ENCODE measurements at regions of chr7 and their contacts with region 1.

Region 1: GRCh38 chr7:5997222-5997808 is 11.5 kb downstream of the PMS2 start:
- DNase-seq: peak in 32 of 35 experiments; percentile 20 to 76 (median 45)
- ATAC-seq: peak; percentile 43 to 71 (median 65)
- H3K4me3 ChIP-seq: no peak overlapping the region
- H3K4me3 Mint-ChIP-seq: no peak overlapping the region
- H3K27ac ChIP-seq: no peak overlapping the region
- H3K27ac Mint-ChIP-seq: no peak overlapping the region
- H3K4me1 ChIP-seq: no peaks in the 10 kb centered on the region
- H3K4me1 Mint-ChIP-seq: peaks cover 0 to 2% (median 0%) of the 10 kb centered on the region in 3 donors
- H3K27me3 ChIP-seq: no peaks in the 10 kb centered on the region
- H3K27me3 Mint-ChIP-seq: no peaks in the 10 kb centered on the region

Region 2: GRCh38 chr7:6106140-6106904 is 109.0 kb after region 1 on chr7:
- CTCF ChIA-PET with region 1: interaction called, 7 to 25 read pairs
- POLR2A ChIA-PET with region 1: no interaction called
- DNase-seq: peak in 27 of 35 experiments; percentile 6 to 67 (median 18)
- ATAC-seq: peak in 1 of 4 experiments; percentile 14
- H3K4me3 ChIP-seq: peak overlapping the region; percentile 69 to 76
- H3K4me3 Mint-ChIP-seq: peak overlapping the region; percentile 88 to 92 (median 91)
- H3K27ac ChIP-seq: peak overlapping the region; percentile 91
- H3K27ac Mint-ChIP-seq: peak overlapping the region; percentile 93 to 95
- H3K4me1 ChIP-seq: peaks cover 4 to 22% of the 10 kb centered on the region in 2 experiments
- H3K4me1 Mint-ChIP-seq: peaks cover 41 to 44% (median 42%) of the 10 kb centered on the region in 3 donors
- H3K27me3 ChIP-seq: no peaks in the 10 kb centered on the region
- H3K27me3 Mint-ChIP-seq: no peaks in the 10 kb centered on the region

Region 3: DNA sequence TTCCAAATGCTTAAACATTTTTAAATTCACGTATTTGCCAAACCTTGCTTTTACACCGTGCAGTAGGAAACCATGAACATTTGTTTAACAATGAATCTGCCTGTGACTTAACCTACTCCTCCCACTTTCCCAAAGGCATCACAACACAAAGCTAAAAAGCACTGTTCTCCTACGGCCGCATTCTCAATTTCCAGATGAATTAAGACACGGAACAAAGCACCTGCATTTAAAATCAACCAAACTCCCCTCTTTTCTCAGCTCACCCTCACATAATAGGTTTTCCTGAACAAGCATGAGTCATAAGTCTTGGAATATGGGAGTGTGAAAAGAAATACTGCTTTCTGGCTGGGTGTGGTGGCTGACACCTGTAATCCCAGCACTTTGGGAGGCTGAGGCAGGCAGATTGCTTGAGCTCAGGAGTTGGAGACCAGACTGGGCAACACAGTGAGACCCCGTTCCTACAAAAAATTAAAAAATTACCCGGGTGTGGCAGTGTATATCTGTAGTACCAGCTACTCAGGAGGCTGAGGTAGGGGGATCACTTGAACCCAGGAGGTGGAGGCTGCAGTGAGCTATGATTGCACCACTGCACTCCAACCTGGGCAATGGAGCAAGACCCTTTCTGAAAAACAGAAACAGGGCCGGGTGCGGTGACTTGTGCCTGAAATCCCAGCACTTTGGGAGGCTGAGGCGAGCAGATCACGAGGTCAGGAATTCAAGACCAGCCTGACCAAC is 326.8 kb after region 1 on chr7:
- CTCF ChIA-PET with region 1: interaction called in 1 of 2 experiments, 17 read pairs
- POLR2A ChIA-PET with region 1: no interaction called
- DNase-seq: no peak
- ATAC-seq: no peak
- H3K4me3 ChIP-seq: no peak overlapping the region
- H3K4me3 Mint-ChIP-seq: no peak overlapping the region
- H3K27ac ChIP-seq: no peak overlapping the region
- H3K27ac Mint-ChIP-seq: no peak overlapping the region
- H3K4me1 ChIP-seq: peaks cover 0 to 3% of the 10 kb centered on the region in 2 experiments
- H3K4me1 Mint-ChIP-seq: peaks cover 4 to 6% (median 4%) of the 10 kb centered on the region in 3 donors
- H3K27me3 ChIP-seq: no peaks in the 10 kb centered on the region
- H3K27me3 Mint-ChIP-seq: peaks cover 2 to 4% of the 10 kb centered on the region in 2 donors

Region 4: GRCh38 chr7:6350433-6351058 is 353.2 kb after region 1 on chr7:
- CTCF ChIA-PET with region 1: interaction called in 1 of 2 experiments, 12 read pairs
- POLR2A ChIA-PET with region 1: no interaction called
- DNase-seq: no peak
- ATAC-seq: no peak
- H3K4me3 ChIP-seq: no peak overlapping the region
- H3K4me3 Mint-ChIP-seq: no peak overlapping the region
- H3K27ac ChIP-seq: no peak overlapping the region
- H3K27ac Mint-ChIP-seq: peak overlapping the region in 1 of 2 donors; percentile 28
- H3K4me1 ChIP-seq: peaks cover 2 to 15% of the 10 kb centered on the region in 2 experiments
- H3K4me1 Mint-ChIP-seq: peaks cover 6 to 13% (median 11%) of the 10 kb centered on the region in 3 donors
- H3K27me3 ChIP-seq: peaks cover 0 to 8% of the 10 kb centered on the region in 2 experiments
- H3K27me3 Mint-ChIP-seq: peaks cover 4 to 5% of the 10 kb centered on the region in 2 donors

Region 5: GRCh38 chr7:6375348-6376101 is 378.2 kb after region 1 on chr7:
- CTCF ChIA-PET with region 1: no interaction called
- POLR2A ChIA-PET with region 1: no interaction called
- DNase-seq: peak in 28 of 35 experiments; percentile 3 to 58 (median 22)
- ATAC-seq: peak in 1 of 4 experiments; percentile 32
- H3K4me3 ChIP-seq: peak overlapping the region; percentile 71 to 73
- H3K4me3 Mint-ChIP-seq: peak overlapping the region; percentile 87 to 93 (median 87)
- H3K27ac ChIP-seq: peak overlapping the region; percentile 68
- H3K27ac Mint-ChIP-seq: peak overlapping the region; percentile 89 to 94
- H3K4me1 ChIP-seq: peaks cover 10 to 50% of the 10 kb centered on the region in 2 experiments
- H3K4me1 Mint-ChIP-seq: peaks cover 34 to 46% (median 40%) of the 10 kb centered on the region in 3 donors
- H3K27me3 ChIP-seq: no peaks in the 10 kb centered on the region
- H3K27me3 Mint-ChIP-seq: no peaks in the 10 kb centered on the region